Naive thymus-derived CD4-positive, alpha-beta T cell (primary cell): ENCODE measurements at regions of chr3 and their contacts with region 1.

Region 1: DNA sequence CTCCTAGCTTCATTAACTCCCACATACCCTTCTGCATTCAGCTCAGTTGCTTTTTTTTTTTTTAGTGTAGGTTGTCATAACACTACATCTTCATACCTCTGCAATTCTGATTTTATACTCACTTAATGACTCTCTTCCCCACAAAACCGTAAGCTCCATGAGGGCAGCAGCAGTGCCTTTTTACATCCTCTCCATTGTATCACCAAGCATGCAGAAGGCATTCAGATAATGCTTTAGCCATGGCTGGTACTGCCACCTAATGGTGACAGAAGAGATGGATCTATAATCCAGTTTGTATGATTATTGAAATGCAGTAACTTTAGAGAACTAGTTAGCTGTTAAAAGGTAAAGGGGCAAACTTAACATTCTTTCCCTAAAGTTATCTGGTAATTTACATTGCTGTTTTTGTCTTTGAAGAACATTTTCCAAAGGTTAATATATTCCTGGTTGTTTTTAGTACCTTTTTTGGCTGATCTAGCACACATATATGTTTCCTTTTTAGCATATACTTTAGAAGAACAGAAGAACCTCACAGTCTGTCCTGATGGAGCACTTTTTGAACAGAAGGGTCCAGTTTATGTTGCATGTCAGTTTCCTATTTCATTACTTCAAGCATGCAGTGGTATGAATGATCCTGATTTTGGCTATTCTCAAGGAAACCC is 36.8 kb downstream of the ATP1B3 start:
- DNase-seq: peak in 7 of 9 donors; percentile 40 to 72 (median 60)
- ATAC-seq: peak; percentile 93
- H3K4me3 ChIP-seq: no peak overlapping the region
- H3K4me3 Mint-ChIP-seq: no peak overlapping the region
- H3K27ac ChIP-seq: no peak overlapping the region
- H3K27ac Mint-ChIP-seq: peak overlapping the region in 2 of 9 donors; percentile 11 to 18
- H3K4me1 ChIP-seq: no peaks in the 10 kb centered on the region
- H3K4me1 Mint-ChIP-seq: peaks cover 0 to 5% (median 3%) of the 10 kb centered on the region in 7 donors
- H3K27me3 ChIP-seq: no peaks in the 10 kb centered on the region
- H3K27me3 Mint-ChIP-seq: no peaks in the 10 kb centered on the region

Region 2: DNA sequence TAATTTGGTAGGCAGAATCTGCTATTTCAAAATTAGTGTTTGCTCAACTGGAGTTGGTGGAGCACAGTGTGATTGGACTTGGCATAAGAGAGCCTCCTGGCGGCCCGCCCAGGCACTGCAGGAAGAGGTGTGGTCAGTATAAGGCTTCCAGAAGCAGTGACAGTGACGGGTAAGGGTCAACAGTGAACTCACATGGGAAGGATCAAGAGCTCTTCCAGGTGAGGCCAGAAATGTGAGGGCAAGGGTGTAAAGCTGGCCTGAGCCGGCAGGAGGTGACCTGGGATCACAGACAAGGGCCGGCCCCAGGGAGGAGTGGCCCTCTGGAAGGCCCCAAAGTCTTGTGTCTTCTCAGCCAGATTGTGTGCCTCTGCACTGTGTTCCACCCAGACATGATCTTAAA is 268.4 kb before region 1 on chr3:
- CTCF ChIA-PET with region 1: no interaction called
- POLR2A ChIA-PET with region 1: no interaction called
- intact Hi-C with region 1: loop called in 1 of 2 experiments (anchors 1 kb)
- DNase-seq: peak; percentile 8 to 76 (median 43)
- ATAC-seq: peak; percentile 90
- H3K4me3 ChIP-seq: no peak overlapping the region
- H3K4me3 Mint-ChIP-seq: no peak overlapping the region
- H3K27ac ChIP-seq: no peak overlapping the region
- H3K27ac Mint-ChIP-seq: peak overlapping the region in 1 of 9 donors; percentile 52
- H3K4me1 ChIP-seq: no peaks in the 10 kb centered on the region
- H3K4me1 Mint-ChIP-seq: peaks cover 0 to 7% (median 0%) of the 10 kb centered on the region in 7 donors
- H3K27me3 ChIP-seq: no peaks in the 10 kb centered on the region
- H3K27me3 Mint-ChIP-seq: peaks cover 0 to 4% (median 0%) of the 10 kb centered on the region in 5 donors

Region 3: GRCh38 chr3:141981084-141981483 is 67.8 kb after region 1 on chr3:
- CTCF ChIA-PET with region 1: no interaction called
- POLR2A ChIA-PET with region 1: no interaction called
- intact Hi-C with region 1: no loop called
- DNase-seq: no peak
- ATAC-seq: no peak
- H3K4me3 ChIP-seq: no peak overlapping the region
- H3K4me3 Mint-ChIP-seq: no peak overlapping the region
- H3K27ac ChIP-seq: no peak overlapping the region
- H3K27ac Mint-ChIP-seq: no peak overlapping the region
- H3K4me1 ChIP-seq: no peaks in the 10 kb centered on the region
- H3K4me1 Mint-ChIP-seq: peaks cover 0 to 5% (median 0%) of the 10 kb centered on the region in 7 donors
- H3K27me3 ChIP-seq: no peaks in the 10 kb centered on the region
- H3K27me3 Mint-ChIP-seq: no peaks in the 10 kb centered on the region